Posterior cingulate gyrus (tissue), 11 donors: ENCODE measurements at regions of chr15 and their contacts with region 1.

Region 1: GRCh38 chr15:63093486-63094205 is 28.0 kb upstream of the LACTB start:
- DNase-seq: peak; percentile 61 to 97 (median 84)

Region 2: DNA sequence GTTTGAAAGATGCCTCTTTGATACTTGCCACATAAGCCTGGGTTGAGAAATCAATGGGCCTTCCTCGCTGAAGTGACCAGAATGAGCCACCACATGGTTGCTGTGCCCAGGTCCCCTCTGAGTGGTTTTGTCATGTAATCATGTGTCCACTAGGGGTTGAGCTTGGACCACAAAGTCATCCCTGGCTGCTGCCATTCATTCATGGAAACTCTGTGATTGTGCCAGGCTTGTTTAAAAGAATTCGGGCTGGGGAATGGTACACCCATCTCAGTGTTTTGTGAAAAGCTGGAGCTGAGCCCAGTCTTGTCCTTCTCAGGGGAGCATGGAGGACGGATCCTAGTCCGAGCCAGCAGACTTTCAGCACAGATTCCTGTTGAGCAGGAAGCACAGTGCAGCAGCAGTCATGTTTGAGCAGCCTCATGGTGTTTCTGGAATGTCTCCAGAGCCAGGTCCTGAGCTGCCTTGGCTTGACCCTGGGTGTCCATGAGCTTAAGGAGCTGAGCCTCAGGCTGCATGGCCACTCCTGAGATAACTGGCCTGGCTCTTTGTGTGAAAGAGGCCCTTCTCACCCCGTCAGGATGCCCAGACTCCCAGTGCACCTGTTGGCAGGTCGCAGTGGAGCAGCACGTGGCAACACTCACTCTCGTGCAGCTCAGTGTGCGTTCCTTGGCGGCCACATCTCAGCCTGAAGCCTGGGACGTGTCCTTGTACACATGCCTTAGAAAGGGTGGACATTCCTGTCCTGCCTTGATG is 311.4 kb before region 1 on chr15:
- intact Hi-C with region 1: loop called (anchors 1 kb)
- DNase-seq: peak in 6 of 10 donors; percentile 35 to 89 (median 50)

Region 3: DNA sequence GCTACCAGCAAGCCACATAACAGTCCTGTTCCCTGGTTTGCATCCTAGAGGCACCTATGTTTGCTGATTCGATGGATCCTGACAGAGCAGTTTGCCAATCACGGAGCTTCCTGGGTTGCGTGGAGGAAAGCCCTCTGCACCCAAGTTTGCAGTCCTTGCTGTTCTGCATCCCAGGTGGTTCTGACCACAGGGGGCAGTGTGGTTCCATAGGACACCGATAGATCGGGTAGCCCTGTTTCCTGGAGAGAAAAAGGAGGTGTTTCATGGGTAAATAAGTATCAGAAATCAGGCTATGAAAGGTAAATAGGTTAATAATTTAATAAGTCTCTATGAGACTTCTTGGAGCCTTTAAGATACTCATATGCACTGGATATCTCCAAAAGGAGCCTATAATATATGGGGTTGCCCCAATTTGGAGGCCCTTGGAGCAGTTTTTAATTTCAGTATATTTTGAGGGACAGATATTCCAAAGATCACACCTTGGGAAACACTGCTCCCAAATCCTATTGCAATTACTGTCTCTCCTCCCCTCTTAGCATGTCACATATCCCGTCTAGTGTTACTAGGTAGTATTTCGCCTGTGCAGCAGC is 245.7 kb before region 1 on chr15:
- intact Hi-C with region 1: loop called (anchors 1 kb)
- DNase-seq: peak; percentile 67 to 97 (median 86)

Region 4: DNA sequence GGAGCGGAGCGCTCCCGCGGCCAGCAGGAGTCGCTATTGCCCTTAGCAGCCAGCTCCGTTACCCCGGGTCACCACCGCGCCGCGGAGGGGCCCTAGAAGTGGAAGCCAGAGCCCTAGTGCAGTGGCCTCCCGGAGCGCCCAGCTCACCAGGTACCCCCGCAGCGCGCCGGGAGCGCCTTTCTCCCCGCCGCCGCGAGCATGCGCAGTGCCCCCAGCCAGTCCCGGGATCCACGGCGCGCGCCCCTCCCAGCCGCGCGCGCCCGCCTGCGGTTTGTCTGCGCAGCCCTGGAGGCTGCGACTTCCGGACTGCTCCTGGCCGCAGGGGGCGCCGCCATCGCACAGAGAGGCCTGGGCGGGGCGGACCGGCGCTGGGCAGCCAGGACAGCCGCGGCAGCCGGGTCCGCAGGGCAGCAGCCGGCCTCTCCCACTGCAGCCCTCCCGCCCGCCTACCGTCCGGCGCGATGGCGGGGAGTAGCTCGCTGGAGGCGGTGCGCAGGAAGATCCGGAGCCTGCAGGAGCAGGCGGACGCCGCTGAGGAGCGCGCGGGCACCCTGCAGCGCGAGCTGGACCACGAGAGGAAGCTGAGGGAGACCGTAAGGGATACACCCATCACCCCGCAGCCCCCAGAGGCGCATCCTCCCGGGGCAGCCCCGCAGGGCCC is 45.4 kb before region 1 on chr15:
- intact Hi-C with region 1: loop called (anchors 1 kb)
- DNase-seq: peak; percentile 71 to 97 (median 82)

Region 5: GRCh38 chr15:63420333-63420747 is 326.7 kb after region 1 on chr15:
- intact Hi-C with region 1: no loop called
- DNase-seq: no peak